ENCODE measurements at regions of chr11 and their contacts with region 1.

Region 1: GRCh38 chr11:57644748-57645688 is 4.7 kb downstream of the YPEL4 start:
- DNase-seq: peak; percentile 92
- H3K4me3 ChIP-seq: no peak overlapping the region
- H3K27ac ChIP-seq: peak overlapping the region in 5 of 8 donors; percentile 20 to 57 (median 40)
- H3K4me1 ChIP-seq: peaks cover 19 to 78% (median 55%) of the 10 kb centered on the region in 6 donors
- H3K27me3 ChIP-seq: peaks cover 0 to 61% (median 31%) of the 10 kb centered on the region in 7 donors
- CTCF ChIP-seq: peak; percentile 49 to 93 (median 83)
- POLR2A ChIP-seq: no peak

Region 2: DNA sequence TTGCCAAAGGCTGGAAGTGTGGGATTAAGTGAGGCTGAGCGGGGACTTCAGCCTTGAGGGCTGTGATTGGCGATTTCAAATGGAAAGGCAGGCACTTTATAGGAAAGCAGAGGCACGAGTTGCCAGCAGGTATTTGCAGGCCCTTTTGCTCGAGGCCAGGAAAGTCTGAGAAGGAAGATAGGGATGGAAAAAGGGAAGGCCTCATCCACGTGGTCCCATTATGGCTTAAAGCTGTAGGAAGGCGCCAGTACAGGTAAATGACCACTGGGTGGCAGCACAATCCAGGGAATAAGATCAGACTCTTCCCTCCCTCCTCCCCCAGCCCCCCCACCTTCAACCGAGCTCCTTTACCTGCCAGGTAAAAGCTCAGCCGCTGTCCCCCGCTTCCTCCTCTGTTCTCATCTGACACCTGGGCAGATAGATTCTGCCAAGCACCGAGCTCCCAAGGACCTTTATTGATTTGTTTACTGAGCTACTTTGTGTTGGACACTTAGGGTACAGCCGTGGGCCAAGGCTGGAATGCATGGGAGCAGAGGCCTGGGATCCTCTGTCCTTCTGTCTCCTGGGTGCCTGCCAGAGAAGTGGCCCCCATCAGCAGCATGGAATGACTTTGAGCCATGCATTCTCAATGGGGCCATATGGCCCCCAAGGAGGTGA is 299.3 kb before region 1 on chr11:
- intact Hi-C with region 1: loop called (anchors 10 kb)
- DNase-seq: peak; percentile 82
- H3K4me3 ChIP-seq: no peak overlapping the region
- H3K27ac ChIP-seq: no peak overlapping the region
- H3K4me1 ChIP-seq: peaks cover 0 to 15% (median 9%) of the 10 kb centered on the region in 6 donors
- H3K27me3 ChIP-seq: peaks cover 0 to 7% (median 0%) of the 10 kb centered on the region in 7 donors
- CTCF ChIP-seq: peak; percentile 71 to 95 (median 87)
- POLR2A ChIP-seq: no peak

Region 3: DNA sequence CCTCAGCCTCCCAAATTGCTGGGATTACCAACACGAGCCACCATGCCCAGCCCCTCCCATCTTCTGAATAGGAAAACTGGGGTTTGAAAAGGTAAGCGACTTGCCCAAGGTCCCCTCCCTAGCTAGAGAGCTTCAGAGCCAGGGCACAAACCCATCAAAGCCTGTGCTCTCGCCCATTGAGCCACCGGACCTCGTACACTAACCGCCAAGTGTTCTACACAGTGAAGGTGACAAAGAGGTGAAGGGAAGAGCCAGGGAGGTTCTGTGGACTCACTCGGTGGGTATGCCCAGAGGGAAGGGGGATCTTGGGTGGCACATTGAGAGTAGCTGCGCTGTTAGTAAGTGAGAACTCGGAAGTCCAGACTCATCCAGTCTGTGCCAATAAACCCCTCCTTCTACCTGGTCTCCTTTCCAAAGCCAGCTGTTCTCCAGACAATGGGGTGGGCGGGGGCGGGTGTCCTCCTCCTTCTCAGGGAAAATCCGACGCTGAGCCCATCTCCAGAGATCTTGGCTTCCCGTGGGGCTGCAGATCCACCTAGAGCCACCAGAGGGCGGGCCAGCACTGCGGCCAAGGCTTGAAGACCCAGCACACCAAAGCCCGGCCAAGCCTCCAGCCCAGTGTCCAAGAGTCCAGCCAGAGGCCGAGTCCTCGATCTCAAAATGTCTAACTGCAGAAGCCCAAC is 187.9 kb before region 1 on chr11:
- intact Hi-C with region 1: loop called (anchors 5 kb)
- DNase-seq: peak; percentile 95
- H3K4me3 ChIP-seq: peak overlapping the region in 1 of 8 donors; percentile 71
- H3K27ac ChIP-seq: no peak overlapping the region
- H3K4me1 ChIP-seq: peaks cover 22 to 47% (median 42%) of the 10 kb centered on the region in 6 donors
- H3K27me3 ChIP-seq: peaks cover 5 to 64% (median 39%) of the 10 kb centered on the region in 7 donors
- CTCF ChIP-seq: peak; percentile 93 to 99 (median 98)
- POLR2A ChIP-seq: no peak

Region 4: GRCh38 chr11:57571606-57572005 is 73.4 kb before region 1 on chr11:
- intact Hi-C with region 1: loop called (anchors 5 kb)
- DNase-seq: no peak
- H3K4me3 ChIP-seq: no peak overlapping the region
- H3K27ac ChIP-seq: peak overlapping the region in 1 of 8 donors; percentile 16
- H3K4me1 ChIP-seq: peaks cover 0 to 33% (median 15%) of the 10 kb centered on the region in 6 donors
- H3K27me3 ChIP-seq: no peaks in the 10 kb centered on the region
- CTCF ChIP-seq: no peak
- POLR2A ChIP-seq: no peak

Region 5: GRCh38 chr11:57778318-57779037 is 133.5 kb after region 1 on chr11:
- intact Hi-C with region 1: no loop called
- DNase-seq: peak; percentile 79
- H3K4me3 ChIP-seq: peak overlapping the region in 1 of 8 donors; percentile 8
- H3K27ac ChIP-seq: peak overlapping the region; percentile 11 to 90 (median 78)
- H3K4me1 ChIP-seq: peaks cover 54 to 100% (median 86%) of the 10 kb centered on the region in 6 donors
- H3K27me3 ChIP-seq: no peaks in the 10 kb centered on the region
- CTCF ChIP-seq: no peak
- POLR2A ChIP-seq: no peak

Measured in spleen (tissue), 13 donors.